ENCODE measurements at regions of chr4 and their contacts with region 1.

Region 1: GRCh38 chr4:186554539-186554913 is 841 bp downstream of the MTNR1A start:
- DNase-seq: no peak
- ATAC-seq: peak; percentile 74
- H3K4me3 ChIP-seq: peak overlapping the region; percentile 41 to 52
- H3K27ac ChIP-seq: no peak overlapping the region
- H3K4me1 ChIP-seq: no peaks in the 10 kb centered on the region
- H3K27me3 ChIP-seq: peaks cover 4% of the 10 kb centered on the region
- CTCF ChIP-seq: peak; percentile 14; the same call in 1 of the 2 replicates

Region 2: DNA sequence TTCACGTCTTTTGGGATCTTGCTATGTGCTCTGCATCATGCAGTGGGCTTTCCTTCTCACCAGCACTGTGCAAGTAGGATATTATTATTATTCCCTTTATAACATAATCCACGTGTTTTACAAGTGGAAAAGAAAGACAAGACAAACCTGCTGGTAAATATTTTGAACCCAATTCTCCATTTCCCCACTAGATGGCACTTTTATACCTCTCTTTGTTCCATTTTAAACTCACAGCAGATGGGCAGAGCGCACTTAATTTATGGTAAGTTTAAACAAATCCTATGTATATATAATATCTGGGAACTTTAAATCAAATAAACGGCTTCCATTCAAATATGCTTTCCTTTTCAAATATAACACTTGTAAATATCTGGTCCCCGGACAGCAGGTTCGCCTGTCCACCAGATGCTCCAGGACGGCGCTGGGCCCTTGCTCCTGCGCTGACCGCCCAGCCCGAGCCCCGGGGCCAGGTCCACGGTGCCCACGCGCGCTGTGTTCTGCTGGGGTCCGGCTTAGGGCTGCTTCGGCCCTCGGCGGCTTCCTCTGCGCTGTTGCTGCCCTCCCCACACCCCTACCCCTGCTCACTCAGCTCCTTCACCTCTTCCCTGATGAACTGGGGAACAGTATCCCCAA is 257.4 kb before region 1 on chr4:
- CTCF ChIA-PET with region 1: interaction called, 3 read pairs
- POLR2A ChIA-PET with region 1: no interaction called
- in situ Hi-C with region 1: no loop called
- intact Hi-C with region 1: loop called (anchors 2 kb)
- DNase-seq: peak; percentile 41
- ATAC-seq: no peak; the same call in 1 of the 2 replicates
- H3K4me3 ChIP-seq: no peak overlapping the region
- H3K27ac ChIP-seq: no peak overlapping the region
- H3K4me1 ChIP-seq: no peaks in the 10 kb centered on the region
- H3K27me3 ChIP-seq: no peaks in the 10 kb centered on the region
- CTCF ChIP-seq: peak; percentile 65; the same call in 1 of the 2 replicates

Region 3: DNA sequence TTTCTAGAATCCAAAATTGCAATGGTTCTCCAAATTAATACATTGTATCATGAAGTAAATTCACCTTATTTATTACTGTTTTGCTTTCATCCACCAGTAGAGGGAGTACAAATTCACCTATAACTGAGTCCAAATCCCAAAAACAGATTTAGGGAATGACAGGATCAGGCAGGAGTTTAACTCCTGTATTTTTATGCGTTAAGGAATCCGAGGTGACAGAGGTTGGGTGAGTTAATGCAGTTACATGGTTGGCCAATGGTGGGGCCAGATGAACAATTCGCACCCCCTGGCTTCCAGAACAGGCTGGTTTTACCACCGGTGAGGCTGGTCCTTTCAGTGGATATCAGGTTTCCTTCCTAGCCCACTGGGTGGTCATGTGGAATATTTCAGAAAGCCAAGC is 81.6 kb before region 1 on chr4:
- CTCF ChIA-PET with region 1: interaction called, 4 read pairs
- POLR2A ChIA-PET with region 1: no interaction called
- in situ Hi-C with region 1: no loop called
- intact Hi-C with region 1: loop called (anchors 5 kb)
- DNase-seq: no peak
- ATAC-seq: no peak
- H3K4me3 ChIP-seq: no peak overlapping the region
- H3K27ac ChIP-seq: no peak overlapping the region
- H3K4me1 ChIP-seq: no peaks in the 10 kb centered on the region
- H3K27me3 ChIP-seq: peaks cover 2% of the 10 kb centered on the region; the same call in 1 of the 2 replicates
- CTCF ChIP-seq: peak; percentile 70

Region 4: GRCh38 chr4:186543206-186543605 is 11.3 kb before region 1 on chr4:
- CTCF ChIA-PET with region 1: no interaction called
- POLR2A ChIA-PET with region 1: no interaction called
- in situ Hi-C with region 1: no loop called
- intact Hi-C with region 1: no loop called
- DNase-seq: no peak
- ATAC-seq: no peak
- H3K4me3 ChIP-seq: no peak overlapping the region
- H3K27ac ChIP-seq: no peak overlapping the region
- H3K4me1 ChIP-seq: no peaks in the 10 kb centered on the region
- H3K27me3 ChIP-seq: no peaks in the 10 kb centered on the region
- CTCF ChIP-seq: no peak

Measured in Panc1 (cell line).